Naive thymus-derived CD4-positive, alpha-beta T cell (primary cell): ENCODE measurements at regions of chr5 and their contacts with region 1.

Region 1: GRCh38 chr5:31204955-31205354 is 11.5 kb downstream of the CDH6 start:
- DNase-seq: no peak
- ATAC-seq: no peak
- H3K4me3 ChIP-seq: no peak overlapping the region
- H3K4me3 Mint-ChIP-seq: no peak overlapping the region
- H3K27ac ChIP-seq: no peak overlapping the region
- H3K27ac Mint-ChIP-seq: no peak overlapping the region
- H3K4me1 ChIP-seq: no peaks in the 10 kb centered on the region
- H3K4me1 Mint-ChIP-seq: no peaks in the 10 kb centered on the region
- H3K27me3 ChIP-seq: no peaks in the 10 kb centered on the region
- H3K27me3 Mint-ChIP-seq: peaks cover 0 to 13% (median 0%) of the 10 kb centered on the region in 5 donors

Region 2: GRCh38 chr5:31122998-31123951 is 81.7 kb before region 1 on chr5:
- CTCF ChIA-PET with region 1: no interaction called
- POLR2A ChIA-PET with region 1: no interaction called
- intact Hi-C with region 1: loop called in 1 of 2 experiments (anchors 2 kb)
- DNase-seq: no peak
- ATAC-seq: no peak
- H3K4me3 ChIP-seq: no peak overlapping the region
- H3K4me3 Mint-ChIP-seq: no peak overlapping the region
- H3K27ac ChIP-seq: no peak overlapping the region
- H3K27ac Mint-ChIP-seq: no peak overlapping the region
- H3K4me1 ChIP-seq: no peaks in the 10 kb centered on the region
- H3K4me1 Mint-ChIP-seq: no peaks in the 10 kb centered on the region
- H3K27me3 ChIP-seq: no peaks in the 10 kb centered on the region
- H3K27me3 Mint-ChIP-seq: no peaks in the 10 kb centered on the region

Region 3: DNA sequence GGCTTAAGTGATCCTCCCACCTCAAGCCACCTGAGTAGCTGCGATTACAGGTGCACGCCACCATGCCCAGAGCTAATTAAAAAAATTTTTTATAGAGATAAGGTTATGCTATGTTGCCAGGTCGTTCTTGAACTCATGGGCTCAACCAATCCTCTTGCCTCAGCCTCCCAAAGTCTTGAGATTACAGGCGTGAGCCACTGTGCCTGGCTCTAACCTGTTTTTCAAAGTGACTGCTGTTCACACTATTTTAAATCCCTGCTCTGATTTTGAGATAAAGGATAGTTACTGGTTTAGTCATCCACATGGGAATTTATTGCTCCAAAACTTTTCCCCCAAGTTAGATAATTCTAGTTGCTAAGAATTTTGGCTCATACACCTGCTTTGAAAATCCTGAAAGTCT is 1156.0 kb after region 1 on chr5:
- CTCF ChIA-PET with region 1: no interaction called
- POLR2A ChIA-PET with region 1: no interaction called
- intact Hi-C with region 1: no loop called
- DNase-seq: no peak
- ATAC-seq: no peak
- H3K4me3 ChIP-seq: no peak overlapping the region
- H3K4me3 Mint-ChIP-seq: no peak overlapping the region
- H3K27ac ChIP-seq: no peak overlapping the region
- H3K27ac Mint-ChIP-seq: peak overlapping the region in 2 of 9 donors; percentile 4 to 51
- H3K4me1 ChIP-seq: no peaks in the 10 kb centered on the region
- H3K4me1 Mint-ChIP-seq: no peaks in the 10 kb centered on the region
- H3K27me3 ChIP-seq: no peaks in the 10 kb centered on the region
- H3K27me3 Mint-ChIP-seq: no peaks in the 10 kb centered on the region